ENCODE measurements at regions of chr2 and their contacts with region 1.

Region 1: DNA sequence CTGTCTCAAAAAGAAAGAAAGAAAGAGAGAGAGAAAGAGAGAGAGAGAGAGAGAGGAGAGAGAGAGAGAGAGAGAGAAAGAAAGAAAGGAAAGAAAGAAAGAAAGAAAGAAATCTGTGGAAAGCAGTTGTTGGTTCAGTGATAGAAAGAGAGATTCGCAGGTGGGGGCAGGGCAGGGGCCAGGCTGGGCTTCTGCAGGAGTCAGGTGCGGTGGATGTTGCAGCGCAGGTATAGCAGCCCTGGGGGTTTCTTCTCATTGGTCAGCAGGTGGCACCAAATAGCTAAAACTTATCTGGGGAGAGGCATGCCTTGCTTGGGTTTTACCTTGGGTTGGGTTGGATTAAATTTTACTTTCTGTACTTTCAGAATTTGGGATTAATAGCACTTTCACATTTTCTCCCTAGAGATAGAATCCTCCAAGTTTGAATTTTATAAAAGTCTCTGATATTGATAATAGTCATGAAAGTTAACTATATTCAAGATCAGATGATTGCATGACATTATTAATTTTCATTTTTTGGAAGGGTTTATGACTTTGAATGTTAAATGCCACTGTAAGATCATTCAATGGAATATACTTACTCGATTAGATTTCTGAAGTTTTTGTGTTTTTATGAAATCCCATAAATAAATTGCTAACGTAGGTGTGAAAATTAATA is 66.6 kb downstream of the SPTBN1 start:
- DNase-seq: peak; percentile 72 to 92 (median 73)
- H3K4me3 ChIP-seq: no peak overlapping the region
- H3K27ac ChIP-seq: peak overlapping the region in 1 of 2 donors; percentile 7
- H3K4me1 ChIP-seq: peaks cover 0 to 24% (median 24%) of the 10 kb centered on the region in 3 donors
- H3K27me3 ChIP-seq: no peaks in the 10 kb centered on the region
- CTCF ChIP-seq: peak; percentile 71

Region 2: DNA sequence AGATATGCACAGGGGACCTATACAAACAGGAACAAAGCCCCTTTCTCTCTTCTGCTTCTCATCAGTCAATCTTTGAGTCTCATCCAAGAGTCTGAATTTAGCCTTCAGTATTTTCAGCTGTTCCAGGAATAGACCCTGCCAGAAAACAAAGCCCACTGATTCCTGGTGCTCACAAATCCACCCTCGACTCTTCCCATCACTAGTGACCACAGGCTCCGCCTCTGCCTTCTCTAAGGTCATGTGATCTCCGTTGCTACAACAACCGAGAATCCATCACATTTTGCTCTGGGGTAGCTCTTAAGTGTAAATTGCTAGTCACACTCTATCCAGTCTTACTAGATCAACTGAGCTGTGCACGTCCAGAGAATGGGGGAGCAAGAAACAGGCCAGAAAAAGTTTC is 113.0 kb before region 1 on chr2:
- intact Hi-C with region 1: no loop called
- DNase-seq: no peak
- H3K4me3 ChIP-seq: no peak overlapping the region
- H3K27ac ChIP-seq: no peak overlapping the region
- H3K4me1 ChIP-seq: no peaks in the 10 kb centered on the region
- H3K27me3 ChIP-seq: no peaks in the 10 kb centered on the region
- CTCF ChIP-seq: no peak

Region 3: GRCh38 chr2:54613794-54614257 is 91.1 kb after region 1 on chr2:
- intact Hi-C with region 1: no loop called
- DNase-seq: no peak
- H3K4me3 ChIP-seq: no peak overlapping the region
- H3K27ac ChIP-seq: peak overlapping the region; percentile 51
- H3K4me1 ChIP-seq: peaks cover 3 to 51% (median 35%) of the 10 kb centered on the region in 3 donors
- H3K27me3 ChIP-seq: no peaks in the 10 kb centered on the region
- CTCF ChIP-seq: no peak

Region 4: GRCh38 chr2:54704688-54705605 is 182.2 kb after region 1 on chr2:
- intact Hi-C with region 1: loop called (anchors 10 kb)
- DNase-seq: peak in 2 of 5 donors; percentile 78 to 88
- H3K4me3 ChIP-seq: no peak overlapping the region
- H3K27ac ChIP-seq: no peak overlapping the region
- H3K4me1 ChIP-seq: peaks cover 0 to 2% (median 0%) of the 10 kb centered on the region in 3 donors
- H3K27me3 ChIP-seq: no peaks in the 10 kb centered on the region
- CTCF ChIP-seq: peak; percentile 57

Region 5: DNA sequence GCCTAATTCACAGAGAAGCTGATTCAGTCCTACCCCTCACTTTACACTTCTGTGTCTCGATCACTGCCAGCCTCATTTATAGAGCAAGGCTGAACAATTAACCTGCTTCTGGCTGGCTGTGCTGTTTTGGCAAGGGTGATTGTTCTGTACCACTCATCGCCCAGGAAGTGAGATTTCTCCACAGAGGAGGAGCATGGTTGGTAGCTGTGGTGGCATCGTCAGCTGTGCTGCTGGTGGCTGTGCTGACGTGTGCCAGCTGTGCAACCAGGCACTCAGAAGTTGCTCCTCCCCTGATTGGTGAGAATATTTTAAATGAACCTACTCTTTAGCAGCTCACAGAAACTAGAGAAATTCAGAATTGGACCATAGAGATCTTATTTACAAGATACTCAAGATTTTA is 359.0 kb after region 1 on chr2:
- intact Hi-C with region 1: no loop called
- DNase-seq: no peak
- H3K4me3 ChIP-seq: no peak overlapping the region
- H3K27ac ChIP-seq: no peak overlapping the region
- H3K4me1 ChIP-seq: peaks cover 0 to 4% (median 0%) of the 10 kb centered on the region in 3 donors
- H3K27me3 ChIP-seq: no peaks in the 10 kb centered on the region
- CTCF ChIP-seq: no peak